Mammary epithelial cell (primary cell): ENCODE measurements at regions of chr3 and their contacts with region 1.

Region 1: GRCh38 chr3:159503944-159504343 is 484.7 kb upstream of the IL12A start:
- DNase-seq: no peak
- H3K4me3 ChIP-seq: no peak overlapping the region
- H3K27ac ChIP-seq: no peak overlapping the region
- H3K4me1 ChIP-seq: peaks cover 4% of the 10 kb centered on the region
- H3K27me3 ChIP-seq: peaks cover 2% of the 10 kb centered on the region
- CTCF ChIP-seq: peak in 1 of 2 donors; percentile 39

Region 2: DNA sequence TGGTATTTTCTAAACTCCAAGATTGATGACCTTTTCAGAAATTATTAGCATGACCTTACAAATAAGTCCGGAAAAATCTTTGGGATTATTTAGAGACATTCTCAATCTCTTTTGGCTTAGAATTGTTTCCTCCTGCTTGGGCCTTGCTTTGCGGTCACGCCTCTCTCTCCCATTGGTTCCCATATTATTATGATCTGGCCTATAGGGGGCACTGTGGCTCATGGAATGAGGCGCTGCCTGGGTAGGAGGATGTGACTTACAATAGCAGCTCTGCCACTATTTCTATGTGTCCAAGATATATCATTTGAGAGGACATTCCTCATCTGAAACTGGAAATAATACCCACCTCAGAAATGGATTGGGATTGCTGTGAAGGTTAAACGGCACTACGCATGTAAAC is 237.2 kb before region 1 on chr3:
- CTCF ChIA-PET with region 1: no interaction called
- dilution Hi-C with region 1: no loop called
- in situ Hi-C with region 1: no loop called
- intact Hi-C with region 1: loop called (anchors 2 kb)
- DNase-seq: peak; percentile 42
- H3K4me3 ChIP-seq: no peak overlapping the region
- H3K27ac ChIP-seq: no peak overlapping the region
- H3K4me1 ChIP-seq: no peaks in the 10 kb centered on the region
- H3K27me3 ChIP-seq: peaks cover 2% of the 10 kb centered on the region
- CTCF ChIP-seq: peak; percentile 52 to 58

Region 3: GRCh38 chr3:159583662-159584061 is 79.7 kb after region 1 on chr3:
- CTCF ChIA-PET with region 1: no interaction called
- dilution Hi-C with region 1: no loop called
- in situ Hi-C with region 1: no loop called
- intact Hi-C with region 1: no loop called
- DNase-seq: no peak
- H3K4me3 ChIP-seq: no peak overlapping the region
- H3K27ac ChIP-seq: no peak overlapping the region
- H3K4me1 ChIP-seq: no peaks in the 10 kb centered on the region
- H3K27me3 ChIP-seq: peaks cover 1% of the 10 kb centered on the region
- CTCF ChIP-seq: no peak